ENCODE measurements at regions of chr6 and their contacts with region 1.

Region 1: DNA sequence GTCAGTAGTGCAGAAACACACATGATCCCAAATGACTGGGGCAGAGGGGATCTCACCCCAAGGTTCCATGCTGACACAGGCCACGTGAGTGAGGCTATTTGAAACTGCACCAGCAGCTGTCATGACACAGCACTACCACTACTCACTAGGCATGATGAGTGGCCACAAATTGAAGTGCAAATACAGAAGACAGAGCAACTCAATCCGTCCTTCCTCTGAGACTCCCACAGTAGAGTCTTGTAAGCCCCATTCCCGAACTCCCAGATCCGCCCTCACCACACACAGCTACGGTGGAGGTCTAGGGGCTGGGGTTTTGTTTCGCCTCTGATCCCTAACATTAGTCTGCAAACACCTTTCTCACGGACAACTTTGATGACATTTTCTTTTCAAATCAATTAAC is 113.3 kb upstream of the NUP153 start:
- DNase-seq: no peak
- H3K4me3 ChIP-seq: no peak overlapping the region
- H3K27ac ChIP-seq: no peak overlapping the region
- H3K4me1 ChIP-seq: no peaks in the 10 kb centered on the region
- H3K27me3 ChIP-seq: no peaks in the 10 kb centered on the region
- CTCF ChIP-seq: no peak

Region 2: GRCh38 chr6:17156112-17156921 is 663.7 kb before region 1 on chr6:
- CTCF ChIA-PET with region 1: no interaction called
- POLR2A ChIA-PET with region 1: no interaction called
- intact Hi-C with region 1: loop called (anchors 5 kb)
- DNase-seq: peak; percentile 49 to 56
- H3K4me3 ChIP-seq: no peak overlapping the region
- H3K27ac ChIP-seq: no peak overlapping the region
- H3K4me1 ChIP-seq: no peaks in the 10 kb centered on the region
- H3K27me3 ChIP-seq: no peaks in the 10 kb centered on the region
- CTCF ChIP-seq: peak; percentile 94

Region 3: GRCh38 chr6:17831135-17831534 is 11.1 kb after region 1 on chr6:
- CTCF ChIA-PET with region 1: interaction called, 19 read pairs
- POLR2A ChIA-PET with region 1: no interaction called
- intact Hi-C with region 1: no loop called
- DNase-seq: no peak
- H3K4me3 ChIP-seq: no peak overlapping the region
- H3K27ac ChIP-seq: no peak overlapping the region
- H3K4me1 ChIP-seq: no peaks in the 10 kb centered on the region
- H3K27me3 ChIP-seq: no peaks in the 10 kb centered on the region
- CTCF ChIP-seq: no peak

Region 4: DNA sequence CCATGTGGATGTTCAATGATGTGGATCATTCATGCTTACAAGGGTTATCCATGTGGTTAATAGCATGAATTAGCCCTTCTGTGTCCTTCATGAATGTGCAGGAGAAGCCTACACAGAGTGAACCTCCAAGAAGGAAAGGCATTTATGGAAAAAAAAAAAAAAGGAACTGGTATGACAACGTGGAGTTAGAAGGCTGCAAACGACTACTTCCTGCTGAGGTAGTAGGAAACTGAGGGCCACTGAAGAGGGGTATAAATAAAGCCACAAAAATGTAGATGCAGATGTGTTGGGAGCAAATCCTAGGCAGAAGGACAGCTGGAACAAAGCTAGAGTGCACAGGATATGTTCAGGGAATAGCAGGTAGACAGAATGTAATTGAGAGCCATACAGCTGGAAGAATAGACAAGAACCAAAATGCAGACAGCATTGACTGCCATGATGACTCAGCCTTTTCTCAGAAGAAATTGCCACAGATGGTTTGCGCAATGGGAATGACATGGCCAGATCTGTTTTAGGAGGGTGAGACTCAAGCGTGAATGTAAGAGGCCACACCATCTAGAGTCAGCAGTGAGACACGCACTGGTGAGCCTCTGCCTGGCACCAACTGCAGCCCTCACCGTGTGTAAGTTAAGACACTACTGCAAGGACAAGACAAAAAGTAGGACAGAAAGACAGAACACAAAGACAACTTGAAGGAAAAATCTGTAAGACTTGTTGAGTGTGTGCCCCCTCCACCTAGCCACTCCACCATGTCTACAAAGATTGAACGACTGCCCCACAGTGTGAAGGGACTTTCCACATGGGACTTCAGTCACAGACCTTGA is 87.6 kb after region 1 on chr6:
- CTCF ChIA-PET with region 1: no interaction called
- POLR2A ChIA-PET with region 1: no interaction called
- intact Hi-C with region 1: loop called (anchors 10 kb)
- DNase-seq: peak; percentile 78 to 94
- H3K4me3 ChIP-seq: no peak overlapping the region; the same call in none of the 2 replicates
- H3K27ac ChIP-seq: peak overlapping the region; percentile 98
- H3K4me1 ChIP-seq: peaks cover 43% of the 10 kb centered on the region
- H3K27me3 ChIP-seq: no peaks in the 10 kb centered on the region
- CTCF ChIP-seq: peak; percentile 16; the same call in 1 of the 2 replicates

Region 5: DNA sequence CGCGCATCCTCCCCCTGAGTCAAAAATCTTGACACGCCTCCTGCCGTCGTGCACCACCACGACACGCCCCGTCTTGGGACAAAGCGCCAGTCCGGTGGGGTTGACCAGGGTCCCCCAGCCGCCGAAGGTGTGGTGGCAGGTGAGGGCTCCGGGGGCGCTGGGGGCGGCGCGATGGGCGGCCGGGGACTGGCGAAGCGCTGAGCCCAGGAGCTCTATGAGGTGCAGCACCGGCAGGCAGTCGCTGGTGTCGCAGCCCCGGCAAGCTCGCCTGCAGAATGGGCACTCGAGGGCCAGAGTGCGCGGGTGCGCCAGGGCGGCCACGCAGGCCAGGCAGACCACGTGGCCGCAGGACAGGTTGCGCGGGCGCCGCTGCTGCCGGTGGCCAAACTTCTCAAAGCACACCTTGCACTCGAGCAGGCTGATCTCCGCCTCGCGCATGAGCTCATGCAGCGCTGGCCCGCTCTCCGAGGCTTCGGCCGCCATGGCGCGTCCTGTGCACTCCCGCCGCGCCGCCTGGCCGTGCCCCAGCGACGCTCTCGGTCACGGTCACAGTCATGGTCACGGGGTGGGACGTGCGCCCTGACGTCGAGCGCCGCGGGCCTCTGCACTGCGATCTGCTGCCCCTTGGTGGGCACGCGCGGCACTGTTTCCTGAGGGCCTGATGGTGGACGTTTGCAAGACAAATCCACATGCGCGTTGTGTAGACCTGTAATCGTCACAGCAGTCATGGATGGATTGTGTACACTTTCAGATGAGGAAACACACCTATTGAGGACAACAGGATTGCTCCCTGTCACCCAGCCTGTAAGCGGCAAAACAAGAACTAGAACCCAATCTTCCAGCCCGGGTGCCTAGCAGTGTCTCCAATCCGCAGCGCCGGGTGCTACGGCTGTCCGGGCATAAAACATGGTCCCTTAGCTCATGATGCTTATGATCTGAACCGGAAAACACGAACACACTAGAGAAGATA is 302.4 kb after region 1 on chr6 and contains the start of gene NHLRC1:
- CTCF ChIA-PET with region 1: no interaction called
- POLR2A ChIA-PET with region 1: no interaction called
- intact Hi-C with region 1: loop called (anchors 1 kb)
- DNase-seq: peak; percentile 42 to 88
- H3K4me3 ChIP-seq: peak within 1 kb of the TSS; percentile 19; the same call in 1 of the 2 replicates
- H3K27ac ChIP-seq: no peak within 1 kb of the TSS
- H3K4me1 ChIP-seq: no peaks in the 10 kb centered on the region
- H3K27me3 ChIP-seq: no peaks in the 10 kb centered on the region
- CTCF ChIP-seq: peak; percentile 76
- total RNA-seq, gene NHLRC1: 0.90 and 1.0 TPM in 2 replicates

Region 6: DNA sequence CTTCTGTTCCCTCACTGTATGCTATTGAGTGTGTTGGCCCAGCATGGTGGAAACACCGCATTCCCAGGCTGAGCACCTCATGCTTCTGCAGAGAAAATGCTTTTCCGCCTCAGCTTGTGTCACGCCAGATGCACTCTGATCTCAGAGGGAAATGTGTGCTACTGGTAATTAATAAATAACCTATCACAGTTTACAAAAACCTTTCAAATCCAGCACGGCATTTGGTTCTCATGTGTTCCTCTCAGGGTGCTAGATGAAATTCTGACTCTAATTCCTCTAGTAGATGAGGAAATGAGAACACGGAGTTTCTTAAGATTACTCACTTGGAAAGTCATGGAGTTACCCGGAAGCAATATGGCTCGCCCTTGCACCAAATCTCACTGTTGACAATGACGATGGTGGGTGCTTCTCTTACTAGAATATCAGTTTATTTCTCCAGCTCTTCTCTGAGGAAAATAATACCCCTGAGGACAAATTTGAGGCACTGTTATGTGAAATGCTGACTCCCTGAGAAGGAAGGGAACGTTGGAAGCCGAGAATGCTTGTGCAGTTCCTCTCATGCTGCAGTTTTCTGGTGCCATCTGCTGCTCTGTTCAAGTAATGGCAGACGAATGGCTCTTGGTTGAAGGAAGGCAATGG is 683.7 kb after region 1 on chr6:
- CTCF ChIA-PET with region 1: no interaction called
- POLR2A ChIA-PET with region 1: no interaction called
- intact Hi-C with region 1: loop called (anchors 5 kb)
- DNase-seq: peak; percentile 61 to 63
- H3K4me3 ChIP-seq: peak overlapping the region; percentile 17; the same call in 1 of the 2 replicates
- H3K27ac ChIP-seq: no peak overlapping the region
- H3K4me1 ChIP-seq: peaks cover 12% of the 10 kb centered on the region; the same call in 1 of the 2 replicates
- H3K27me3 ChIP-seq: no peaks in the 10 kb centered on the region
- CTCF ChIP-seq: peak; percentile 95